ENCODE measurements at regions of chr2 and their contacts with region 1.

Region 1: DNA sequence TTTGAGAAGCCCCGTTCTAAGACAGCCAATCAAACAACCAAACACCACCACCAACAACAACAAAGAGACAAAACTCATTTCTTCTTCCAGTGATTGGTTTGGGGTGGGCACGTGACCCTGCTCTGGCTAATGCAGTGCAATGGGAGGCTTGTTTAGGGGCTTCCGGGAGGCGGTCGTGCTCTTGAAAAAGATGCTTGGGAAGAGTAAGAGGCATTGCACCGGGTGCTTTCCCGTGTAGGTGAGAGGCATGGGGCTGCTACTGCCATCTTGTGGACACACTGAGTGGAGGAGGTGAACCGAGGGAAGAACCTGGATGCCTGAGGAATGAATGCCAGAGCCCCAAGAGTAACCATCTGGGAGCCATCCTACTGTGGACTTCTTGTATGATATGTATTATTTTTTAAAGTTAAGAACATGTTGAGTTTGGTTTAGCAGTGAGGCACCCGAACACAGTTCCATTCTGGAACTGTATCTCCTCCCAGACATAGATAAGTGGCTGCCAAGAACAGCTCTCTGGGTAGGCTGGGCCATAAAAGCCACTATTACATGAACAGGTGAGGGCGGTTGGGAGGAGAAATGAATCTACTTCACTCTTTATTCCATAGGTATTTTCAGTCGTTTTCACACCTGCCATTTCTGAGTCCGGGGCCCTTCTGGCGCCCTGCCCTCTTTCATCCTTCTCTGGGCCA is 19.1 kb upstream of the ARHGAP25 start:
- DNase-seq: no peak
- H3K4me3 Mint-ChIP-seq: peak overlapping the region; percentile 47
- H3K27ac Mint-ChIP-seq: peak overlapping the region; percentile 59
- H3K4me1 Mint-ChIP-seq: peaks cover 82% of the 10 kb centered on the region
- H3K27me3 Mint-ChIP-seq: peaks cover 4% of the 10 kb centered on the region

Region 2: DNA sequence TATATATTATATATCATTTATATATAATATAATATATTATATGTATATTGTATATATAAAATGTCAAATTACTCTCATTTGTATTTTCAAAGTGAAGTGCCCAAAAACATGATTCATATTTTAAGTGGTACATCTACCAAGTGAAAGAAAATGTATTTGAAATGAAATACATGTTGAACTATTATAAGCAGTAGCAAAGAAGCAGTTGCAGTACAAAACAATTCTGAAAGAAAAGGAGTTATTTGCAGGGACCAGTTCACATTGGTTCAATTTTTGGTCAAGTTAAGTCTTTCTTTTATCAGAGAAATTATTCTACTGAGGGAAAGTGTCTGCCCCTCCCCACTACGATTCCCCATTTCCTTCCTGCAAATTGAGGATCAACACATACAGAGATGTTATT is 196.3 kb before region 1 on chr2:
- intact Hi-C with region 1: loop called (anchors 5 kb)
- DNase-seq: no peak
- H3K4me3 Mint-ChIP-seq: no peak overlapping the region
- H3K27ac Mint-ChIP-seq: no peak overlapping the region
- H3K4me1 Mint-ChIP-seq: peaks cover 24% of the 10 kb centered on the region
- H3K27me3 Mint-ChIP-seq: no peaks in the 10 kb centered on the region

Region 3: DNA sequence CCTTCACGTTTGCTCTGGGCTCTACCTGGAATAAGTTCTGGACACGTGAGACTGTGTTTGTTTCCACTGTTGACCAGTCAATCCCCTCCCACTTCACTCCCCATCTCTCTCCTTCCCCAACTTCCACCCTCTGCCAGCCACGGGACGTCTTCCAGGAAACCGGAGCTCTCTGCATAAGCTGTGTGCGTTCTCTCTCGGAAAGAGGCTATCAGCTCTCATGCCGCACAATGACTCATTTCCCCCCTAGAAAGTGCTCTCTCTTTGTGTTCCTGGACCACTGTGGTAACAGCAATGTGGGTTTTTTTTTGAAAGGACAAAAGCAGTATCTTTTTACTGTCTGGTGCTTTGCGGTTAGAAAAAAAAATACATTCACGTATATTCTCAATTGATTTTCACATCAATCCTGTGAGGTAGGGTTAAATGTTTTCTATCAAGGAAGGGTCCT is 61.9 kb before region 1 on chr2:
- intact Hi-C with region 1: loop called (anchors 1 kb)
- DNase-seq: peak; percentile 51
- H3K4me3 Mint-ChIP-seq: peak overlapping the region; percentile 8
- H3K27ac Mint-ChIP-seq: peak overlapping the region; percentile 64
- H3K4me1 Mint-ChIP-seq: peaks cover 47% of the 10 kb centered on the region
- H3K27me3 Mint-ChIP-seq: peaks cover 26% of the 10 kb centered on the region

Region 4: DNA sequence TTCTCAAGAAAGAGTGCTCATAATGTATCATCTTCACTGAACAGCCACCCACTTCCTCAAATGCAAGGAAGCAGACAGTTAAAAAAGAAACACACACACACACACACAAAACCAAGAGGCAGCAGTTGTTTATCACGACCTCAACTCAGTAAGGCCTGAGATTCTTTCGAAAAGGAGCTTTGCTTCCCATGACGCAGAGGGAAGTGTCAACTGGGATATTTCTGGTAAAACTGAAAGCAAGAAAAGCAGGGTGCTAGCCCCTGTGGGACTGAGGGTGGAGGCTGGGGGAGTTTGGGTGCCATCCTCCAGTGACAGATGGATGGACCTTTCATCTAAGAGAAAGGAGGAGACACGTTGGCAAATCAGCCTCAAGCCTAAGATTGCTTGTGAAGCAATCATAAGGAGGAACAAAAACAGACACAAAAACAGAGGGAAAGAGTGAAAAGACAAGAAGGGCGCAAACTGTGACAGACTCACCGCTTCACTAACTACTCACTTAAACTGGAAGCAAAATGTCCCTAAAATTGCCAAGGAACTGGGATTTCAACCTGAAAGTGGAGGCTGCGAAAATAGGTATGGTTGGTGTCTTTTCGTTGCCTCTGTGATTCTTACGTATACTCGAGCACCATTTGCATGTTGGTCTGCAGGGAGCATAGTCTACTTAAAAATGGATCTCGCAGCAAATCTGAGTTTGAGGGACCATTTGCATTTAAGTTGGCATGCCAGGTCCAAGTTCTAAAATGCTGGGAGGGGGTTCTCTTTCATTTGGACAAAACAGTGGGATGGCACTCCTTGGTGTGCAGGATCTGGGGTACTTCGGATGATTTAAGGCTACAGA is 19.4 kb after region 1 on chr2 and contains the start of gene ARHGAP25:
- intact Hi-C with region 1: loop called (anchors 1 kb)
- DNase-seq: peak; percentile 61
- H3K4me3 Mint-ChIP-seq: no peak within 1 kb of the TSS
- H3K27ac Mint-ChIP-seq: no peak within 1 kb of the TSS
- H3K4me1 Mint-ChIP-seq: peaks cover 42% of the 10 kb centered on the region
- H3K27me3 Mint-ChIP-seq: no peaks in the 10 kb centered on the region
- total RNA-seq, gene ARHGAP25: 71.6 and 74.2 TPM in 2 replicates

Region 5: GRCh38 chr2:68766376-68766845 is 50.9 kb after region 1 on chr2:
- intact Hi-C with region 1: loop called (anchors 1 kb)
- DNase-seq: peak; percentile 75
- H3K4me3 Mint-ChIP-seq: peak overlapping the region; percentile 65
- H3K27ac Mint-ChIP-seq: peak overlapping the region; percentile 92
- H3K4me1 Mint-ChIP-seq: peaks cover 96% of the 10 kb centered on the region
- H3K27me3 Mint-ChIP-seq: no peaks in the 10 kb centered on the region

Region 6: DNA sequence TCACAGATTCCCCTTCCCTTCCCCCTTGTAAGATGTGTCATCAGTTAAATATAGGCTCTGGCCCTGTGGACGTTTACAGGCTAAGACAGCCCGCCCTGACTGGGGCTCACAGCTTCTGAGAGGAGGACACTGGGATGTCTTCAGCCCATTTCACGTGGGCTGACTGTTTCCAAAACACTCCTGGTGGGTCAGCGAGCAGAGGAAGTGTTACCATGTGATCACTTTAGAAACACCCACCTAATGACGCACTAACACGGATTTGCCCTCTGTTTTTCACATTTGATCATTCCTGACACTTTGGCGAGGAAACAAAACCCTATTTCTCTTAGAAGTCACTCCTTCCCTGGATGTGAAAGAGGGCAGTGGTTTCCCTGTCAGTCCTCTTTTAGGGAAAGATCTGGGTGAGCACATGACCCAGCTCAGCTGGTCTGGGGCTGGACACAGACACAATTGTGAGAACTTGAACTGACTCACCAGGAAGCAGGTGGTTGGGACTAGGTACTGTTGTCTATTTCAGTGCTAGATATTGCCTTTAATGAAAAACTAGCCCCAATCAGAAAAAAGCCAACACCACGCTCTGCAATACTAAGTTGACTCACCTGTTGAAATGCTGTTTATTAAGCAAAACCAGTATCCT is 116.9 kb after region 1 on chr2:
- intact Hi-C with region 1: loop called (anchors 2 kb)
- DNase-seq: no peak
- H3K4me3 Mint-ChIP-seq: peak overlapping the region; percentile 62
- H3K27ac Mint-ChIP-seq: peak overlapping the region; percentile 88
- H3K4me1 Mint-ChIP-seq: peaks cover 86% of the 10 kb centered on the region
- H3K27me3 Mint-ChIP-seq: no peaks in the 10 kb centered on the region

Region 7: DNA sequence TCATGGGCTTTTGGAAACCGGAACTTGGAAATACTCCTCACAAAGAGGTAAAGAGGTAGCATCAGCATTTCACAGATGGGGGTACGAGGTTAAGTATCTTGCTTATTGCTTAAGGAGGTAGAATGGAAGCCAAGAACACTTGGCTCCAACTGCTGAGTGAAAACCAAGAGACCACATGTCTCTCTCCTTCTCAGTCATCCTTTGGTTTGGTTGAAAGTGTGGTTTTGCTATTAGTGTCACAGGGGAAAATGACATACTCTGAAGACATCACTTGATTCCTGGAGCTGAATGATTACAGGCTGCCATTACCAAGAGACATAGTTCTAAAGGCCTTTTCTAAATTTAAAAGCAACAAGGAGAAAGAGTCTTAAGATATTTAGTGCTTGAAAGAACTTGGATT is 338.9 kb after region 1 on chr2:
- intact Hi-C with region 1: loop called (anchors 5 kb)
- DNase-seq: peak; percentile 8
- H3K4me3 Mint-ChIP-seq: no peak overlapping the region
- H3K27ac Mint-ChIP-seq: no peak overlapping the region
- H3K4me1 Mint-ChIP-seq: peaks cover 14% of the 10 kb centered on the region
- H3K27me3 Mint-ChIP-seq: peaks cover 54% of the 10 kb centered on the region

Measured in activated T-helper 1 cell treated with anti-CD3 and anti-CD28 coated beads, Interleukin-12 subunit alpha, Interleukin-12 subunit beta, Interleukin-2, Interleukin-4 antibody, amounts not matched to agents 30 ng/mL and 10 ng/mL and 1 ng/mL, durations not matched to agents 14 hours and 24 hours and 36 hours (primary cell).